AG04449 (cell line): ENCODE measurements at regions of chr19 and their contacts with region 1.

Region 1: GRCh38 chr19:47713046-47714021 is at the start of gene EHD2:
- DNase-seq: no peak
- H3K4me3 ChIP-seq: peak within 1 kb of the TSS; percentile 95
- CTCF ChIP-seq: peak; percentile 90

Region 2: DNA sequence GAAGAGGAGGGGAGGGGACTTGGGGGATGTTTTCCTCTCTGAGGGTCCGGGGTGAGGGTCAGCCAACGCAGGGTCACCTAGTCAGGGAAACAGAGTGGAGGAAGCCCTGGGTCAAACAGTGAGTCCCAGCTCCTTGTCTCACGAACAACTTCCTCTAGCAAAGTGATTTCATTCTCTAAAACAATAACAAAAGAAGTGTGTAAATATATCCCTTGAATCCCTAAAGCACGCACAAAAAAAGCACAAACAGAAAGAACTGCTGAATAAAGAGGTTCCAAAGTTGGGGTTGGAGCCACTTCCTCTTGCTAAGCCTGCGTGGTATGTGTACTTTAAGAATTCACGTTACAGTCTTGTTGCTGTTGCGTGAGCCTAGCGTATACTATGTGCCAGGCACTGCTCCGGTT is 382.9 kb before region 1 on chr19:
- CTCF ChIA-PET with region 1: no interaction called
- POLR2A ChIA-PET with region 1: no interaction called
- DNase-seq: no peak
- H3K4me3 ChIP-seq: no peak overlapping the region
- CTCF ChIP-seq: no peak

Region 3: GRCh38 chr19:47697863-47698609 is 15.3 kb before region 1 on chr19:
- CTCF ChIA-PET with region 1: interaction called, 26 read pairs
- POLR2A ChIA-PET with region 1: no interaction called
- DNase-seq: no peak
- H3K4me3 ChIP-seq: no peak overlapping the region
- CTCF ChIP-seq: peak; percentile 99

Region 4: GRCh38 chr19:47745010-47745901 is 31.9 kb after region 1 on chr19 and contains the start of gene NOP53:
- CTCF ChIA-PET with region 1: interaction called, 211 read pairs
- POLR2A ChIA-PET with region 1: interaction called, 75 read pairs
- DNase-seq: peak; percentile 85
- H3K4me3 ChIP-seq: peak within 1 kb of the TSS; percentile 78
- CTCF ChIP-seq: no peak

Region 5: GRCh38 chr19:47765523-47766358 is 52.4 kb after region 1 on chr19:
- CTCF ChIA-PET with region 1: interaction called, 57 read pairs
- POLR2A ChIA-PET with region 1: interaction called, 4 read pairs
- DNase-seq: no peak
- H3K4me3 ChIP-seq: no peak overlapping the region
- CTCF ChIP-seq: peak; percentile 88

Region 6: GRCh38 chr19:47790398-47790814 is 77.1 kb after region 1 on chr19:
- CTCF ChIA-PET with region 1: interaction called, 43 read pairs
- POLR2A ChIA-PET with region 1: no interaction called
- DNase-seq: no peak
- H3K4me3 ChIP-seq: no peak overlapping the region
- CTCF ChIP-seq: peak; percentile 92